ENCODE measurements at regions of chr3 and their contacts with region 1.

Region 1: DNA sequence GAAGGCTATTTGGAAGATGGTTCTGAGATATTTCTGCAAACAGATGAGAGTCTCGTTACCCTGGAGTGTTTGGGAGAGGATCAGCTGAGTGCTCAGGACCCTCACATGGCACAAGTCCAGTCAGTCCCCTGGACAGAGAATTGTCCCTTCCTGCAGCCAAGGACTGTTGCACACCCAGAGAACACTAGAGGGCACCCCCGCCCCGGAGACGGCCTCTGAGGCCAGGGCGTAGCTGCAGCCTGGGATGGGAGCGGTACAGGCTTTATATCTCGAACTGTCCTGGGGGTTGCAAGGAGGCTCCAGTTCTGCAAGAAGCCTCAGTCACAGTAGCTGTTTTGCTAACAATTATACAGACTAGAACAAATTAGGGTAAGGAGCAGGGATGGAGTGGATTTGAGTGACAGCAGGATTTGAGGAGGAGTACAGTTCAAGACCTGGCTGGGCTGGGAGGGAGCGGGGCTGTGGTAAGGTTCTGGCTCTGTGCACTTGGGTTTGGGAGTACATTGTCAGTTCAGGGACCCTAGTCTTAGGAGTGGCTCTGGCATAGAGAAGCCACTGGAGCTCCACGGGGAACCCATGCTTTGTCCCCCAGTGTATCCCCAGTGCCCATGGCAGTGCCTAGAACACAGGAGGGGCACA is 67.6 kb upstream of the HACD2 start:
- DNase-seq: peak; percentile 93

Region 2: GRCh38 chr3:123272547-123272946 is 379.9 kb before region 1 on chr3:
- intact Hi-C with region 1: no loop called
- DNase-seq: no peak

Region 3: GRCh38 chr3:123694366-123695145 is 42.1 kb after region 1 on chr3:
- intact Hi-C with region 1: loop called in 1 of 2 experiments (anchors 5 kb)
- DNase-seq: no peak

Region 4: GRCh38 chr3:123700791-123701722 is 48.6 kb after region 1 on chr3:
- intact Hi-C with region 1: loop called (anchors 5 kb)
- DNase-seq: no peak

Region 5: DNA sequence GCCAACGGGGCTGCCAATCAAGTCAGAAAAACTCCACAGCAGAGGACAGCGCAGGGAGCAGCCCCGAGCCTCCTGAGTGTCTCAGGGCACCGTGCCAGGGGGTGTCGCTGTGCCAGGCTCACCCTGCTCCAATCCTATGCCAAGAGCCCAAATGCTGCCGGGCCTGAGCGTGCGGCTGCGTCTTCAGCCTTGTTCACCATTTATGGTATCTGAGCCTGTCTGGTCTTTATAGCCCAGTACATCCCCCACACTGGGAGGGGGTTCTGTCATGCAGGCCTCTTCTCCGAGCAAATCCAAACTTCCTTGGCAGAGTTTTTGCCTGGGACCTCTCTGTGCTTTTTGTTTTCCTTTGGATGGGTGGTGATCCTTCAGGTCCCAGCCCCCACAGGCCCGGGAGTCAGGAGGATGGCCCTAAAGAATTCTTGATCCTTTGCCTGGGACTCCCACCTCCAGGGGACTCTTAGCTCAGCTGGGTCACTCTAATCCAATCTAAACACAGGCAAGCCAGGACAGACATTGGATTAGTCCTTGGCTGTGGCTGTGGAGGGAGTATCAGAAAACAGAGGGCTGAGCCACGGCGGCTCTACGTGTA is 67.5 kb after region 1 on chr3:
- intact Hi-C with region 1: loop called in 1 of 2 experiments (anchors 2 kb)
- DNase-seq: peak; percentile 84

Measured in posterior vena cava (tissue), 2 donors.